CD8-positive, alpha-beta T cell (primary cell): ENCODE measurements at regions of chr7 and their contacts with region 1.

Region 1: GRCh38 chr7:25125137-25125946 is at the start of gene CYCS:
- DNase-seq: peak; percentile 99 to 100 (median 99)
- ATAC-seq: peak; percentile 92
- H3K4me3 ChIP-seq: peak within 1 kb of the TSS; percentile 84 to 86
- H3K4me3 Mint-ChIP-seq: peak within 1 kb of the TSS; percentile 97
- H3K27ac ChIP-seq: peak within 1 kb of the TSS; percentile 96 to 97
- H3K27ac Mint-ChIP-seq: peak within 1 kb of the TSS; percentile 99
- H3K4me1 ChIP-seq: peaks cover 12% of the 10 kb centered on the region
- H3K4me1 Mint-ChIP-seq: peaks cover 22% of the 10 kb centered on the region
- H3K27me3 ChIP-seq: no peaks in the 10 kb centered on the region
- H3K27me3 Mint-ChIP-seq: no peaks in the 10 kb centered on the region
- CTCF ChIP-seq: no peak
- total RNA-seq, gene CYCS: 135 to 140 TPM

Region 2: DNA sequence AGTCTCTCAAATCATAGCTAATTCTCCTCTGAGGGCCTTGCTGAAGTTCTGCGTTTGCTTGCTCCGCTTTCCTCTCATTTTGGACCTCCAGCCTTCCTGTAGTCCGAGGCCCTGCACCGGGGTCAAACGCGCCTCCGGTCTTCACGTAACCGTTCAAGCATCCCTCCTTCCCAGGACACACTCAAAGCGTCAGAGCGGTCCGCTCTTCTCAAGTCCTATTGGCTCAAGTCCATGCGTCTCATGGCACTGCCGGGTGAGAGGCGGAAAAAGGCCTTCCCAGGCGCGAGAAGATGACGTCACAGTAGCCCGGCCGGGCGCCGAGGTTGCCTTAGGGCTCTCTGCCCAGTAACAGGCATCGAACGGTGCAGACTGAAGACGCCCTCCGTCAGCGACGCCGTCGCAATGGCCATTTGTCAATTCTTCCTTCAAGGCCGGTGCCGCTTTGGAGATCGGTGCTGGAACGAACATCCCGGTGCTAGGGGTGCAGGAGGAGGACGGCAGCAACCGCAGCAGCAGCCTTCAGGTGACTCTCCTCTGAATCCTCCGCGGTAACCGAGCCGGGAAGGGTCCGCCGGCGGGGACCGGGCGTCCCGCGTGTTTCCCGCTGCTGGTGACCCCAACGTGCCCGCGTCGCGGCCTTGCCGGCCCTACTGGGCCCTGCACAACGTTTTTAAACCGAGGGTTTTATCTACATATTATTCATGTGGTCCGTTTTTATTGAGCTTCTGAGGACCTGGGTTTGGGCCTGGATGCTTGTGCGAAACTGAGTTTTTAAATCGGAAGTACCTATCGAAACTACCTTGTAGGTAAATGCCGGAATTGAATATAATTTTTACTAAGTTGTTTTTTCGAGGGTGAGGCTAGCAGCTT is 1943.4 kb before region 1 on chr7 and contains the start of gene NUP42:
- CTCF ChIA-PET with region 1: no interaction called
- POLR2A ChIA-PET with region 1: no interaction called
- intact Hi-C with region 1: loop called in 1 of 2 experiments (anchors 10 kb)
- DNase-seq: peak; percentile 89 to 98 (median 95)
- ATAC-seq: peak; percentile 90
- H3K4me3 ChIP-seq: peak within 1 kb of the TSS; percentile 77 to 84
- H3K4me3 Mint-ChIP-seq: peak within 1 kb of the TSS; percentile 100
- H3K27ac ChIP-seq: peak within 1 kb of the TSS; percentile 86 to 91
- H3K27ac Mint-ChIP-seq: peak within 1 kb of the TSS; percentile 100
- H3K4me1 ChIP-seq: peaks cover 30% of the 10 kb centered on the region
- H3K4me1 Mint-ChIP-seq: peaks cover 39% of the 10 kb centered on the region
- H3K27me3 ChIP-seq: no peaks in the 10 kb centered on the region
- H3K27me3 Mint-ChIP-seq: no peaks in the 10 kb centered on the region
- CTCF ChIP-seq: no peak
- total RNA-seq, gene NUP42: 17.3 to 20.4 TPM

Region 3: GRCh38 chr7:23679898-23680413 is 1445.4 kb before region 1 on chr7 and contains the start of gene FAM221A:
- CTCF ChIA-PET with region 1: no interaction called
- POLR2A ChIA-PET with region 1: no interaction called
- intact Hi-C with region 1: loop called in 1 of 2 experiments (anchors 5 kb)
- DNase-seq: peak; percentile 55 to 90 (median 80)
- ATAC-seq: peak; percentile 97
- H3K4me3 ChIP-seq: peak within 1 kb of the TSS; percentile 49 to 71
- H3K4me3 Mint-ChIP-seq: peak within 1 kb of the TSS; percentile 96
- H3K27ac ChIP-seq: peak within 1 kb of the TSS; percentile 3 to 18
- H3K27ac Mint-ChIP-seq: peak within 1 kb of the TSS; percentile 79
- H3K4me1 ChIP-seq: peaks cover 3% of the 10 kb centered on the region
- H3K4me1 Mint-ChIP-seq: peaks cover 18% of the 10 kb centered on the region
- H3K27me3 ChIP-seq: no peaks in the 10 kb centered on the region
- H3K27me3 Mint-ChIP-seq: no peaks in the 10 kb centered on the region
- CTCF ChIP-seq: peak; percentile 73
- total RNA-seq, gene FAM221A: 2.4 to 3.0 TPM

Region 4: DNA sequence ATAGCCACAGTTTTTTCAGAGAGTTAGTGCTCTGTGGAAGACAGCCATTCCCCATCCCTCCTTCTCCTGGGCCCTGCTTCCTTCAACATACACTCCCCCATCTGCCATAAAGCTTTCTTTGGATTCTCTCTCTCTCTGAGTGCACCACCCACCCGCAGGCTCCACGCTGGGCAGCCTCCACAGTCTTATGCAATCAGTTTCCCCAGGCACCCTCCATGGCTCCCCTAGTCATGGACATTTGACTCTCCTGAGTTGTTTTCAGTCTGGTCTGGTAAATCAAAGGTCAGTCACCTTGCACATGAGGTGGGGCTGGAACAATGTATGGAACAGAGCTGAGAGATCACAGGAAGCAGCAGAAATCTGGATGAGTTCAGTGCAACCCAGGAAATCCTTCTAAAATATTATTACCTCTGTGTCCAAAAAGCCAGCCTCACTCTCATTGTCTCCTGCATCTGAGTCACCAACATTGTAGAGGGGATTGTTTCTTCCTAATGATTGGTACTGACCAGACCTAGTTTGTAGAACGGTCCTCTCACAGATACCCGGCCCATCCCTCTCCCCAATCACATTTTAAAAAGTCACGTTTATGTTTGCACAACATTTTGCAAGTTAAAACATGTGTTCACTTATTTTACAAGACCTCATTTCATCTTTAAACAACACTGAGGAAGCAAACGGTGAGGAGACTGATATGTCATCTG is 70.4 kb before region 1 on chr7:
- CTCF ChIA-PET with region 1: no interaction called
- POLR2A ChIA-PET with region 1: no interaction called
- intact Hi-C with region 1: no loop called
- DNase-seq: no peak
- ATAC-seq: no peak
- H3K4me3 ChIP-seq: no peak overlapping the region
- H3K4me3 Mint-ChIP-seq: no peak overlapping the region
- H3K27ac ChIP-seq: no peak overlapping the region
- H3K27ac Mint-ChIP-seq: no peak overlapping the region
- H3K4me1 ChIP-seq: no peaks in the 10 kb centered on the region
- H3K4me1 Mint-ChIP-seq: no peaks in the 10 kb centered on the region
- H3K27me3 ChIP-seq: no peaks in the 10 kb centered on the region
- H3K27me3 Mint-ChIP-seq: peaks cover 3% of the 10 kb centered on the region
- CTCF ChIP-seq: no peak

Region 5: DNA sequence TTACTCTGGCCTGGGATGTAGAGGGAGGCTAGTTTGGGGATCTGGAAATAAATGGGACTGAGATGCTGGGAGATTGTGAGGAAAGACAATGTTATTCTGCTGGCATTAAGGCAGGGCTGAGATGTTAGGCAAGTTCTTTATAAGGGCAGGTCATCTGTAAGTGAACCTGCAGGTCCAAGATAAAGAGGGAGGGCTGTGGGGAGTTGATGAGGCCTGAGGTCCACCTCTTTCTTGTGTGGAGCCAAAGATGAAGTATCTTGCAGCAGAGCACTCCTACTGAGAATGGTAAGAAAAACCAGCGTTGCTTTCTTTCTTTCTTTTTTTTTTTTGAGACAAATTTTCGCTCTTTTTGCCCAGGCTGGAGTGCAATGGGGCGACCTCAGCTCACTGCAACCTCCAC is 19.4 kb before region 1 on chr7:
- CTCF ChIA-PET with region 1: no interaction called
- POLR2A ChIA-PET with region 1: no interaction called
- intact Hi-C with region 1: no loop called
- DNase-seq: no peak
- ATAC-seq: no peak
- H3K4me3 ChIP-seq: no peak overlapping the region
- H3K4me3 Mint-ChIP-seq: no peak overlapping the region
- H3K27ac ChIP-seq: no peak overlapping the region
- H3K27ac Mint-ChIP-seq: no peak overlapping the region
- H3K4me1 ChIP-seq: no peaks in the 10 kb centered on the region
- H3K4me1 Mint-ChIP-seq: no peaks in the 10 kb centered on the region
- H3K27me3 ChIP-seq: no peaks in the 10 kb centered on the region
- H3K27me3 Mint-ChIP-seq: peaks cover 4% of the 10 kb centered on the region
- CTCF ChIP-seq: no peak

Region 6: GRCh38 chr7:25167262-25167843 is 42.0 kb after region 1 on chr7:
- CTCF ChIA-PET with region 1: no interaction called
- POLR2A ChIA-PET with region 1: no interaction called
- intact Hi-C with region 1: loop called in 1 of 2 experiments (anchors 5 kb)
- DNase-seq: no peak
- ATAC-seq: no peak
- H3K4me3 ChIP-seq: no peak overlapping the region
- H3K4me3 Mint-ChIP-seq: no peak overlapping the region
- H3K27ac ChIP-seq: no peak overlapping the region
- H3K27ac Mint-ChIP-seq: no peak overlapping the region
- H3K4me1 ChIP-seq: no peaks in the 10 kb centered on the region
- H3K4me1 Mint-ChIP-seq: no peaks in the 10 kb centered on the region
- H3K27me3 ChIP-seq: no peaks in the 10 kb centered on the region
- H3K27me3 Mint-ChIP-seq: no peaks in the 10 kb centered on the region
- CTCF ChIP-seq: no peak

Region 7: DNA sequence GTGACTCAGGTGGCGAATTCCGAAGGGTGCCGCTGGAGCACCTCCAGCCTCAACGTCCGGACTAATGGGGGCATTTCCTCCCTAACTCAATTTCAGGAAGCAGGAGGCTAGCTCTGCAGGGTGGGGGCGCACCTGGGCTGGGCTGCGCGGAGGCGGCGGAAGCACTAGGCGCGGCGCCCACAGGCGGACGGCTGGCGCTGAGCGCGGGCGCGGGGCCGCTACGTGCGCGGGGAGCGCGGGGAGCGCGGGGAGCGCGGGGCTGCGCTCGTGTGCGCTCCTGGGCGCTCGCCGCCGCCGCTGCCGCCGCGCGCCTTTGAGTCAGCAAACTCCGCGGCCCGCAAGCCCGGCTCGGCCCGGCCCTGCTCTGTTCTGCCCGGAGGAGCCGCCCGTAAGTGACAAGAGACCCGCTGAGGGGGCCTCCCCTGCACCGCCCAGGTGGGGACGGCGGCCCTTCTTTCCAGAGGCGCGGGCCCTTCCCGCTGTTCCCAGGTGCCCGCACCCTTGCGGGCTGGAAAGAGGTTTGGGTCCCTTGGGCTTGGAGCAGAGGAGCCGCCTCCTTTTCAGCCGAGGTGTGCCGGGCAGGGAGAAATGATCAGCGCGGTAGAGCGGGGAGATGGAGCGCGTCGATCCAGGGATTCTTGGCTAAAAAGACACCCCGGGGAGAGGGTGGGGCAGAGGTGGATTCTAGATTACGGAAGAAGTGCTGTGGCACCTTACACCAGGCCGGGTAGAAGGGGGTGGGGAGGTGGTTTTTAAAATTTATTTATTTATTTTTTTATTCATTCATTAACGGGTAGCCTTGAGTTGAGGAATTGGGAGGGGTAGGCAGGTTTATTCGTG is 1166.6 kb after region 1 on chr7 and contains the start of gene SNX10:
- CTCF ChIA-PET with region 1: no interaction called
- POLR2A ChIA-PET with region 1: no interaction called
- intact Hi-C with region 1: loop called (anchors 5 to 10 kb)
- DNase-seq: peak; percentile 45 to 91 (median 72)
- ATAC-seq: peak; percentile 79
- H3K4me3 ChIP-seq: peak within 1 kb of the TSS; percentile 70 to 94
- H3K4me3 Mint-ChIP-seq: peak within 1 kb of the TSS; percentile 91
- H3K27ac ChIP-seq: peak within 1 kb of the TSS; percentile 43 to 78
- H3K27ac Mint-ChIP-seq: peak within 1 kb of the TSS; percentile 85
- H3K4me1 ChIP-seq: peaks cover 32% of the 10 kb centered on the region
- H3K4me1 Mint-ChIP-seq: peaks cover 38% of the 10 kb centered on the region
- H3K27me3 ChIP-seq: no peaks in the 10 kb centered on the region
- H3K27me3 Mint-ChIP-seq: no peaks in the 10 kb centered on the region
- CTCF ChIP-seq: no peak
- total RNA-seq, gene SNX10: 3.9 to 7.0 TPM